ENCODE measurements at regions of chr3 and their contacts with region 1.

Region 1: DNA sequence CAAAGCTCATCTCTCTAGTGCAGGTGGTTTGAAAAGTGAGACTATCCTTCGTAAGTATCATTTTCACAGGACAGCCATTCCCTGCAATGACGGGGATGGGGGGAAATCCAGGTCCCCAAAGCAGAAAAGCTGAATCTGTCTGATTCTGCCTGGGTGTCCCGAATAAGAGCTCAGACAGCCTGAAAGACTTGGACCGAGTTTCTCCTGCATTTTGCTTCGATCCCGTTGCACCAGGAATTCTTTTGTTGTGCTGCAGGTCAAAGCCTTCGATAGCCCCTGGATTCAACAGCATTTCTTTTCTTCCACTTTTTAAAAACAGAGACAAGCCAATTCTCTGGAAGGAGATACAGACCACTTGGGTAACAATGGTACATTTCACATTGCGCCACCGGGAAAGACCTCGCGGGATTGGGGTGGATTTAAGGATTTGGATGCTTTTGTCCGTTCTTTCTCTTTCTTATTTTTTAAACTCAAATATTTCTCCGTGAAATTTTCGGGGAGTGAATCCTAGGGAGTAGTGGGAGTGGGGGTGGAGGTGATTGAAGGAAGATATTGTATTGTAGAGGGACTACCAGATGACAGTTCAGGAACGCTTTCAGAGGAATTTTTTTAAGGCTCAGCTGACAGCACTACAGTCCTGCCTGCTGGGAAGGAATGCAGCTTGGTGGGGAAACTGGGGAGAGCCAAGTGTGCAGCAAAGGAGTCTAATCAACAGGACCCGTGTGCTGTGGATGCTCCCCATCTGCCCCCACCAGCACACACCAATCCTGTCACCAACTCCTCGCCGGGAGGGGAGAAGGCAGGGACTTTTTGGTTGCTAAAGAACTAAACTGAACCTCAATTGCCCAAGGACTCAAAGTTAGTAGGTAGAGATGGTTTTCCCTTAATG is 2.6 kb downstream of the SLITRK3 start:
- DNase-seq: no peak
- H3K4me3 ChIP-seq: no peak overlapping the region
- H3K27ac ChIP-seq: no peak overlapping the region
- H3K4me1 ChIP-seq: peaks cover 2% of the 10 kb centered on the region
- H3K27me3 ChIP-seq: peaks cover 31 to 43% of the 10 kb centered on the region in 2 experiments
- CTCF ChIP-seq: no peak
- POLR2A ChIP-seq: no peak

Region 2: DNA sequence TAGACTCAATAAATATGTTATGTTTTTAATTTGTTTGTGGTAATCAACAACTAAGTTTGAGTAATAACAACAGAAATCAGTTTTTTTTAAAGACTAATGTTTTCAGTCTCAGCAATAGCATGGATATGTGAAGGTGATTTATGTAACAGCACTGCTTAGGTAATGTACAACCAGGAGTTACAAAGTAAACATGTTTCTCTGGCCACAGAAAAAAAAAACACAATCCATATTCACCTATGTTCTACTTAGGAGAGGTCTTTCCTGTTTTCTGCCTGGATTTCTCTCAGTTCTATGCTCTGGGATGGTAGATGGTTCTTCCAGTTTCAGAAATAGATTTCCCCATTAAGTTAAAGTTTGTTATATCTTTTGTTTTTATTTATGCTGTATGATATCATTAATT is 694.7 kb before region 1 on chr3:
- CTCF ChIA-PET with region 1: no interaction called
- POLR2A ChIA-PET with region 1: no interaction called
- dilution Hi-C with region 1: no loop called
- intact Hi-C with region 1: no loop called
- DNase-seq: no peak
- H3K4me3 ChIP-seq: no peak overlapping the region
- H3K27ac ChIP-seq: no peak overlapping the region
- H3K4me1 ChIP-seq: no peaks in the 10 kb centered on the region
- H3K27me3 ChIP-seq: no peaks in the 10 kb centered on the region
- CTCF ChIP-seq: no peak
- POLR2A ChIP-seq: no peak

Region 3: GRCh38 chr3:165206454-165207266 is 13.1 kb after region 1 on chr3:
- CTCF ChIA-PET with region 1: interaction called, 12 read pairs
- POLR2A ChIA-PET with region 1: no interaction called
- dilution Hi-C with region 1: no loop called
- intact Hi-C with region 1: no loop called
- DNase-seq: peak; percentile 64
- H3K4me3 ChIP-seq: no peak overlapping the region
- H3K27ac ChIP-seq: no peak overlapping the region
- H3K4me1 ChIP-seq: no peaks in the 10 kb centered on the region
- H3K27me3 ChIP-seq: no peaks in the 10 kb centered on the region
- CTCF ChIP-seq: peak; percentile 83 to 88
- POLR2A ChIP-seq: no peak

Measured in endothelial cell of umbilical vein (primary cell).